ENCODE measurements at regions of chr3 and their contacts with region 1.

Region 1: DNA sequence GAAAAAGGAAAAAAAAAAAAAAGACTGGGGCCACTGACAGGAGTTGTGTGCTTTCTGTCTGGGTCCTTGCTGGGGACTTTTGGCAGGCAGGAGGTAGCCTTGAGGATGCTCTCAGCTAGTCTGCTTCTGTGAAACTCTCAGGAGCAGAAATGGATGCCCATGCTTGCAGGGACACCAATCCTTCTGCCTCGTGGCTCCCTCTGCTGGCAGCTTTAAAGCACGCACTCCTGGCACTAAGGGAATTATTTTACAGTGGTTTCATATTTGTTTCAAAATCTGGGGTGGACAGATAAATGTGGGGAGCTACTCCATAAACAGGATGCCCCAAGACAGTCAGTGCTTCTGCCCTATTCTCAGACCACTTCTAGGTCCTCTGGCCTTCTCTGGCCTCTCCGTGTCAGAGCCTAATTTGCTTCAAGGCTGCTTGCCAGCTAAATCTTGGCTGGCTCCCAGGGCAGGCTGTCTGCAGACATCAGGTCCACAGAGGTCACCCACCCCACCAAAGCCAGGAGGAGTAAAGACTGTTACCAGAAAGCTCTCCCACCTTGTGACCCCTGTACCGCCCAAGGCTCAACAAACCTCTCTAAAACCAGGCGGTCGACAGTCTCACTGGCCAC is 17.1 kb downstream of the TRAIP start:
- DNase-seq: peak; percentile 83
- H3K4me3 ChIP-seq: no peak overlapping the region
- H3K27ac ChIP-seq: no peak overlapping the region
- H3K4me1 ChIP-seq: peaks cover 0 to 4% (median 1%) of the 10 kb centered on the region in 4 donors
- H3K27me3 ChIP-seq: no peaks in the 10 kb centered on the region
- CTCF ChIP-seq: peak; percentile 87 to 93 (median 91)
- EP300 ChIP-seq: no peak
- POLR2A ChIP-seq: no peak

Region 2: GRCh38 chr3:49703443-49703927 is 135.8 kb before region 1 on chr3:
- in situ Hi-C with region 1: loop called in 1 of 4 experiments (anchors 10 kb)
- intact Hi-C with region 1: loop called (anchors 10 kb)
- DNase-seq: peak; percentile 69
- H3K4me3 ChIP-seq: no peak overlapping the region
- H3K27ac ChIP-seq: no peak overlapping the region
- H3K4me1 ChIP-seq: no peaks in the 10 kb centered on the region
- H3K27me3 ChIP-seq: no peaks in the 10 kb centered on the region
- CTCF ChIP-seq: peak; percentile 71 to 85 (median 83)
- EP300 ChIP-seq: no peak
- POLR2A ChIP-seq: no peak

Region 3: DNA sequence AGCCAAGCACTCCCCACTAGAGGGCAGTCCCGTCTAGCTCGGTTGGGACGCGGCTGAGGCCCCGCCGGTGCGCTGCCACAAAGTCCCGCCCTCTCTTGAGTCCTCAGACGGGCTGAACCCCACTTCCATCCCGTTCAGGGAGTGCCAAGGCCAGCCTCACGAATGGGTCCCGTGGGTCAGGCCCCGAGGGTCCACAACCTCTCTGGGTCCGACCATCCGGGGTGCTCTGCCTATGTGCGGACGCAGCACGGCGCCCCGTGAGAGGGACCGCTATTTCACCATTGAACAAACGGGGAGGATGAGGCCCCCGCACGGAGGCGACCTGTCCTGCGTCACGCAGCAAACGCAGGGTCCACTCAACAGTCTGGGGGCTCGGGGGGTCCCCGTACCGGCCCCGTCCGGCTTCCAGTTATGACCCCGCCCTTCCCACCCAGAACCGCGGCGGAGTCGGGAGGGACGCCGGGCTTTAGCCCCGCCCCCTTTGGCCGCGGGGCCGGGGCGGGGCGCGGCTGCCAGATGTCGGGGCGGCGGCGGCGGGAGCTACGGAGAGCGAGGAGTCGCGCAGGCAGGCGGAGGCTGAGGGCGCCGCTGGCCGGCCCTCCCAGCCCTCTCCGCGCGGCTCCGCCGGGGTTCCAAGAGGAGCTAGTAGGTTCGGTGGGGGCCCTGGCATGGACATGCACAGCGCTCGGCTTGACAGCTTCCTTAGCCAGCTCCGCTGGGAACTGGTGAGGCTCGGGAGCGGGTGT is 36.4 kb before region 1 on chr3 and contains the start of gene INKA1:
- in situ Hi-C with region 1: no loop called
- intact Hi-C with region 1: loop called (anchors 1 kb)
- DNase-seq: peak; percentile 93
- H3K4me3 ChIP-seq: peak within 1 kb of the TSS; percentile 75 to 96 (median 83)
- H3K27ac ChIP-seq: peak within 1 kb of the TSS; percentile 83 to 99 (median 94)
- H3K4me1 ChIP-seq: peaks cover 0 to 30% (median 24%) of the 10 kb centered on the region in 4 donors
- H3K27me3 ChIP-seq: no peaks in the 10 kb centered on the region
- CTCF ChIP-seq: peak; percentile 78 to 95 (median 89)
- EP300 ChIP-seq: no peak
- POLR2A ChIP-seq: peak; percentile 41
- total RNA-seq, gene INKA1: 1.4 to 1.5 TPM in 2 of 4 donors, not detected in the others

Measured in transverse colon (tissue), 4 donors.